Adrenal gland (tissue), 19 donors: ENCODE measurements at regions of chr5 and their contacts with region 1.

Region 1: DNA sequence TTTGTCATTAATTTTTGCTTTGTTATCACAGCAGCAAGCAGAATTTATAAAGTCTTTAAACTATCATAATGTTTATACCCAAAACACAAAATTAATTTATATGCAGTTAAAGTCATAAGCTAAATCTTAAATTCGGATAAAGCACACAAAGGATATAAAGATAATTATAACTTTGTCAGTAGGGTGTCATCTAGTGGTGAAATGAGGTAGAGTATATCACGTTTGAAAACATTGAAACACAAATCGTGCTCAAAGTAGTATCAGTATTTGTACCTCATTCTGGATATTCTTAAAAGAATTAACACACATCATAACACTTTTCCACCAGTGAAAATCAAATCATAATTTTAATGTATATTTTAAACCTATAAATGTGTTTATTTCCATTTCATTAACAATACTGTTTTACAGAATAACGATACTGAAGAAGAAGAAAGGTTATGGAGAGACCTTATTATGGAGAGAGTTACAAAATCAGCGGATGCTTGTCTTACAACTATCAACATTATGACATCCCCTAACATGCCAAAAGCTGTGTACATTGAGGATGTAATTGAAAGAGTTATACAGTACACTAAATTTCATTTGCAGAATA is 129.5 kb downstream of the NIPBL start:
- DNase-seq: no peak
- H3K4me3 ChIP-seq: no peak overlapping the region
- H3K27ac ChIP-seq: no peak overlapping the region
- H3K4me1 ChIP-seq: no peaks in the 10 kb centered on the region
- H3K27me3 ChIP-seq: no peaks in the 10 kb centered on the region
- CTCF ChIP-seq: peak; percentile 47 to 84 (median 70)
- POLR2A ChIP-seq: no peak

Region 2: GRCh38 chr5:36728697-36729543 is 277.1 kb before region 1 on chr5:
- intact Hi-C with region 1: loop called in 1 of 2 experiments (anchors 5 kb)
- DNase-seq: peak in 2 of 7 donors; percentile 13 to 39
- H3K4me3 ChIP-seq: no peak overlapping the region
- H3K27ac ChIP-seq: no peak overlapping the region
- H3K4me1 ChIP-seq: peaks cover 0 to 6% of the 10 kb centered on the region in 2 donors
- H3K27me3 ChIP-seq: no peaks in the 10 kb centered on the region
- CTCF ChIP-seq: peak; percentile 55 to 79 (median 58)
- POLR2A ChIP-seq: no peak

Region 3: GRCh38 chr5:36978196-36978595 is 27.8 kb before region 1 on chr5:
- intact Hi-C with region 1: no loop called
- DNase-seq: no peak
- H3K4me3 ChIP-seq: no peak overlapping the region
- H3K27ac ChIP-seq: no peak overlapping the region
- H3K4me1 ChIP-seq: no peaks in the 10 kb centered on the region
- H3K27me3 ChIP-seq: no peaks in the 10 kb centered on the region
- CTCF ChIP-seq: no peak
- POLR2A ChIP-seq: no peak